Endothelial cell of umbilical vein (primary cell): ENCODE measurements at regions of chr16 and their contacts with region 1.

Region 1: DNA sequence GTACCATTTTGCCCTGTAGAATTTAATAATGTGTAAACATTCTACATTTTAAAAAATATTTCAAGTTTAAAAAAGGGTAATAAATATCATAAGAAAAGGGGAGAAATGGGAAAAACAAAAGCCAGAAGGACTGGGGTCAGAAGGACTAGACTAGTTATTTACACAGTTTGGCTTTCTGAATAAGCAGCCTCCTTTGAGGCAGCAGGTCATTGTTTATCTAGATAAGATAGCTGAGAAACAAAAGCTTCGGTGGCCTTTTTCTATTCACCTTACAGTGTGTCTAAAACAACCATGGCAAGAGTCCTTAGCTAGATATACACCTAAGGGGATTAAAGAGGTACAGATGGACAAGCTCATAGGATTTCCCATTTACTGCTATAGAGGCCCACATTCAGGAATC is 396.5 kb upstream of the PMFBP1 start:
- DNase-seq: peak; percentile 7
- H3K4me3 ChIP-seq: no peak overlapping the region
- H3K27ac ChIP-seq: no peak overlapping the region
- H3K4me1 ChIP-seq: no peaks in the 10 kb centered on the region
- H3K27me3 ChIP-seq: no peaks in the 10 kb centered on the region
- CTCF ChIP-seq: no peak
- POLR2A ChIP-seq: no peak

Region 2: DNA sequence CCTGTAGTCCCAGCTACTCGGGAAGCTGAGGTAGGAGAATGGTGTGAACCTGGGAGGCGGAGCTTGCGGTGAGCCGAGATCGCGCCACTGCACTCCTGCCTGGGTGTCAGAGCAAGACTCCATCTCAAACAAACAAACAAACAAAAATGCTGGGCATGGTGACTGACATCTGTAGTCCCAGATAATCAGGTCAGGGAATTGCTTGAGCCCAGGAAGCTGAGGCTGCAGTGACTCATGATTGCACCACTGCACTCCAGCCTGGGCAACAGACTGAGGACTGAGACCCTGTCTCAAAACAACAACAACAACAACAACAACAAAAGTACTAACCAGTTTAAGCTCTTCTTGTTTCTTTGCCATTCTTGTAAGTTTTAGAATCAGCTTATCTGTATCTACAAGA is 13.6 kb before region 1 on chr16:
- CTCF ChIA-PET with region 1: no interaction called
- POLR2A ChIA-PET with region 1: no interaction called
- dilution Hi-C with region 1: no loop called
- intact Hi-C with region 1: loop called (anchors 2 kb)
- DNase-seq: no peak
- H3K4me3 ChIP-seq: no peak overlapping the region
- H3K27ac ChIP-seq: no peak overlapping the region
- H3K4me1 ChIP-seq: no peaks in the 10 kb centered on the region
- H3K27me3 ChIP-seq: no peaks in the 10 kb centered on the region
- CTCF ChIP-seq: no peak
- POLR2A ChIP-seq: no peak